ENCODE measurements at regions of chr2 and their contacts with region 1.

Region 1: GRCh38 chr2:61255580-61256437 is 93.8 kb downstream of the C2orf74 start:
- DNase-seq: no peak
- ATAC-seq: no peak
- H3K4me3 Mint-ChIP-seq: no peak overlapping the region
- H3K27ac Mint-ChIP-seq: no peak overlapping the region
- H3K4me1 Mint-ChIP-seq: peaks cover 2% of the 10 kb centered on the region
- H3K27me3 Mint-ChIP-seq: no peaks in the 10 kb centered on the region

Region 2: DNA sequence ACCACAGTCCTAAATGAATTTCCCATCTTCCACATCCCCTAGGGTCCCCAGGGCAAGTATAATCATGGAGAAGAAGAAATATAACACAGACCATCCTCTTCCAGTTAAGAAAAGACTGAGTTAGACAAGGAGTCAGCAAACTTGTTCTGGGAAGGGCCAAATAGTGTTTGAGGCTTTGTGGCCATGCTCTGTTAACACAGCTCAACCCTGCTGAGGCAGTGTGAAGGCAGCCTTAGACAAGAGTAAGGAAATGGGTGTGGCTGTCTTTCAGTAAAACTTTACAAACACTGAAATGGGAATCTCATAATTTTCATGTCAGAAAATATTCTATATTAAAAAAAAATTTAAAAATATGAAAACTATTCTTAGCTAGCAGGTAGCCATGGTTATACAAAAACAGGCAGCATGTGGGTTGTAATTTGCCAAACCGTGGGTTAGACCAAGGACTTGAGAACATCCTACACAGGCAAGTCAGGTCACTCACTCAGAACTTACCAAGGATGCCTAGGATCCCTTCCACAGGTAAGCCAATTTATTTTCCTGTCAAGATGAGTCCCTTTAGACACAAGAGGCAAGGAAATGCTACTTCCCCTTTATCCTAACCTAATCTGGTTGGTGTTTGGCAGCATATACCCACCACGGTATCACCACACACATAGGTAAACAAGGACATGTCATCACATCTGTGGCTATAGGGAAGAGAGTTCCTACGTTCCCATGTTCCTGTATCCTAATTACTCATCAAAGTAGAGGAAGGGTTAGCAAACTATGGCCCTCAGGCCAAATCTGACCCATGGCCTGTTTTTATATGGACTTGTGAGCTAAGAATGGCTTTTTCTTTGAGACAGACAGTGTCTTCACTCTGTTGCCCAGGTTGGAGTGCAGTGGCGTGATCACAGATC is 61.9 kb before region 1 on chr2:
- CTCF ChIA-PET with region 1: no interaction called
- POLR2A ChIA-PET with region 1: interaction called, 11 read pairs
- intact Hi-C with region 1: no loop called
- DNase-seq: no peak
- ATAC-seq: no peak
- H3K4me3 Mint-ChIP-seq: no peak overlapping the region
- H3K27ac Mint-ChIP-seq: peak overlapping the region; percentile 25
- H3K4me1 Mint-ChIP-seq: peaks cover 23% of the 10 kb centered on the region
- H3K27me3 Mint-ChIP-seq: no peaks in the 10 kb centered on the region

Region 3: DNA sequence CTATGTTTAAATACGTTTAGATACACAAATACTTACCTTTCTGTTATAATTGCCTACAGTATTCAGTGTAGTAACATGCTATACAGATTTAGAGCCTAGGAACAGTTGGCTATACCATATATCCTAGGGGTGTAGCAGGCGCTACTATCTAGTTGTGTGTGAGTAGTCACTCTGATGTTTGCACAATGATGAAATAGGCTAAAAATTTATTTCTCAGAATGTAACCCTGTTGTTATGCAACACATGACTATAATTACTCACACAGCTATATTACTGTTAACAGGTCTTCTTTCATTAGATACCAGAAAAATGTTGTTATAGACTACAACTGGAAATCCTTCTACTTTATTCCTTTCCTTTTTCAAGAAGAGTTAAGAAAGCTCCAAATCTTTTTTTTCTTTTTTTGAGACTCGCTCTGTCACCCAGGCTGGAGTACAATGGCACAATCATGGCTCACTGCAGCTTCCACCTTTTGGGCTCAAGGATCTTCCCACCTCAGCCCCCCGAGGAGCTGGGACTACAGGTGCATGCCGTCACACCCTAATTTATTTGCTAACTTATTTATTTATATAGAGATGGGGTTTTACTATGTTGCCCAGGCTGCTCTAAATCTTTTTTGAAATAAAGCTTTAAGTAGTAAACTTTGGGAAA is 45.4 kb before region 1 on chr2:
- CTCF ChIA-PET with region 1: no interaction called
- POLR2A ChIA-PET with region 1: no interaction called
- intact Hi-C with region 1: no loop called
- DNase-seq: no peak
- ATAC-seq: peak; percentile 23
- H3K4me3 Mint-ChIP-seq: no peak overlapping the region
- H3K27ac Mint-ChIP-seq: no peak overlapping the region
- H3K4me1 Mint-ChIP-seq: no peaks in the 10 kb centered on the region
- H3K27me3 Mint-ChIP-seq: no peaks in the 10 kb centered on the region